Calu3 (cell line): ENCODE measurements at regions of chr2 and their contacts with region 1.

Region 1: DNA sequence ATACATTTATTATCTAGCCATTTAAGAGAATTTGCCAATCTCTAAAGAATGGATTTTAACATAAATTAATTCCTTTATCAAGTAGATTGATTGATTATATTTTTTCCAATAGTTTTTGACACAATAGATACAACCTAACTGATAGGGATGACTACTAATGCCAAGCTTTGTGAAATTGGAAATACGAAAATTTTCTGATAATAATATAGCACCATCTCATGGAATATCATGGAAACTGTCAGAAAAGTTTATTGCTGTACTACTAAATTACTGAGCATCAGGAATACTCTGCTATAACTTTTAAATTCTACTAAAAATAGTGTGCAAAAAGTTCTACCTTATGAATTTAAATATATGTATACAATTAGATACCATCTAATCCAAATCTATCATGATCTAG is 101.8 kb upstream of the MAP2 start:
- DNase-seq: no peak
- H3K4me3 Mint-ChIP-seq: no peak overlapping the region
- H3K27ac Mint-ChIP-seq: no peak overlapping the region
- H3K4me1 Mint-ChIP-seq: peaks cover 14% of the 10 kb centered on the region
- H3K27me3 Mint-ChIP-seq: no peaks in the 10 kb centered on the region
- CTCF ChIP-seq: no peak

Region 2: DNA sequence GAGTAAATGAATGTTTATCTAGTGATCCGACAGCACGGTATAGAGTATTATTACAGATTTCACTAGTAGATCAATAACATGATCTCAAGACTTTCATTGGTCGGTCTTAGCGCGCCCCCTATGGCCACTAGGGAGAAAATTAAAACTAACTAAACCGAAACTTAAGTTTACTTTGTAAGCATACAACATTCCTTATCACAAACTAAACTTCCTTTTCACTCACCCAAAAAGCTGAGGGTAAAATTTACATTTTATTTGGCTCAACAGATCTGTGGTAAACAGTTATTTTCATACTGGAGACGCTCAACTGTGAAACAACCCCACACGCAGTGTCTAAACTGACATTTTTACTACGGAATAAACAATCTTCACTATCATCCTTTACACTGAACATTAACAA is 113.8 kb before region 1 on chr2:
- CTCF ChIA-PET with region 1: interaction called, 3 read pairs
- intact Hi-C with region 1: loop called (anchors 2 kb)
- DNase-seq: peak; percentile 63
- H3K4me3 Mint-ChIP-seq: peak overlapping the region; percentile 54
- H3K27ac Mint-ChIP-seq: peak overlapping the region; percentile 31
- H3K4me1 Mint-ChIP-seq: peaks cover 8% of the 10 kb centered on the region
- H3K27me3 Mint-ChIP-seq: no peaks in the 10 kb centered on the region
- CTCF ChIP-seq: peak; percentile 81

Region 3: DNA sequence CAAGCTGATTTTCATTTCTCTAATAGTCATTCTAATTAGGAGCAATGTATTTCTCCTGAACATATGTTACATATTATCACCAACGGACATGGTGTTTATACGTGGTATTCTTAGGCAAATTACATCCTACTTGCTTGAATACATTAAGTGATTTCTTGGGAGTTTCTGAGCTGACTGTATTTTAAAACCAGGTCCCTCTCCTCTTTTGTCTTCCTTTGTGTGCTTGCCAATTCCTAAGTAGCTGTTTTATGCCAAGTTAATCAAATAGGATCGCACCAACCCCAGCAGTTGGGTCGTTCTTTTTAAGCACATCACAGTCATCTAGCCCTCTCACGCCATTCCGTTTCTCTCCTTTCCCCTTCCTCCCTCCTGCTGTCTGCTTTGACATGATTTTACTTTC is 26.4 kb after region 1 on chr2:
- CTCF ChIA-PET with region 1: no interaction called
- intact Hi-C with region 1: no loop called
- DNase-seq: no peak
- H3K4me3 Mint-ChIP-seq: no peak overlapping the region
- H3K27ac Mint-ChIP-seq: no peak overlapping the region
- H3K4me1 Mint-ChIP-seq: no peaks in the 10 kb centered on the region
- H3K27me3 Mint-ChIP-seq: no peaks in the 10 kb centered on the region
- CTCF ChIP-seq: no peak

Region 4: DNA sequence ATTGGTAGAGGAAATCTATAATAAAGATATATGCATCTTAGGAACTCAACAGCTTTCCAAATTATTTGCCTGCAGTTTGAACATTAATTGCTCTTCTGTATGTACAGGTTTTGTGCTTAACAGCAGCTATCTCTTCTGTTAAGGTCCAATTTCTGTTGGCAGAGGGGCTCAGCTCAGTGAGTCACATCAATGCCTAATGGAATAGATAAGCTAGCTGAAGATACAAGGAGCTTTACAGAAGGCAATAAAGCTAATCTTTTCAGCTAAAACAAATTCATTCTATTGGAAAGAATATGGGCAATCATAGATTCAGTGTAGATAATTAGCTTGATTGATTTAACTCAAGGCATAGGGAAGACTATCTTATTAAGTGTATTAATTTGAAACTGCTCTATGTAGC is 391.2 kb after region 1 on chr2:
- CTCF ChIA-PET with region 1: no interaction called
- intact Hi-C with region 1: no loop called
- DNase-seq: no peak
- H3K4me3 Mint-ChIP-seq: no peak overlapping the region
- H3K27ac Mint-ChIP-seq: no peak overlapping the region
- H3K4me1 Mint-ChIP-seq: no peaks in the 10 kb centered on the region
- H3K27me3 Mint-ChIP-seq: no peaks in the 10 kb centered on the region
- CTCF ChIP-seq: no peak